ENCODE measurements at regions of chr4 and their contacts with region 1.

Region 1: DNA sequence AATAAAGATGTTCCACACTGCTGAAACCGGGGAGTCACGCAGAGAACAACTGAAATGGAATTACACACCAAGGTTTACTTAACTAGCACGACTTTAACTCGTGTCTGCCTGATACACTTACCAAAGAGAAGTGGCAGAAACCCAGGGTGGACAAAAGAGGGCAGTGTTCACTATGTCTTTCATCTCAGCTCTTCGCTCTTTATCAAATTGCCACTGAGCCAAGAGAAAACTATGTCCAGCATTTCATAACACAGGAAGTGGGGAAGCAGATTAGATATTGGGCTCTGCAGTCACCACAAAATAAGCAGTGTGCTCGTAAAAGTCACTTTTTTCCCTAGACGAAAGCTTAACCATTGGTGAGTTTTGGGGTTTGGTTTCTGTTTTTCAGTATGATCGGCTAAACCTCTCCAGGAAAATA is 155.7 kb downstream of the CHIC2 start:
- DNase-seq: peak; percentile 58
- H3K4me3 ChIP-seq: peak overlapping the region; percentile 14 to 21; a peak in 3 of 4 replicates
- H3K27ac ChIP-seq: peak overlapping the region; percentile 59 to 86
- H3K4me1 ChIP-seq: peaks cover 7 to 22% of the 10 kb centered on the region in 2 experiments; a peak in 3 of 4 replicates
- H3K27me3 ChIP-seq: no peaks in the 10 kb centered on the region
- CTCF ChIP-seq: peak; percentile 85
- EP300 ChIP-seq: peak; percentile 19 to 61; a peak in 3 of 4 replicates
- RAD21 ChIP-seq: peak; percentile 97

Region 2: DNA sequence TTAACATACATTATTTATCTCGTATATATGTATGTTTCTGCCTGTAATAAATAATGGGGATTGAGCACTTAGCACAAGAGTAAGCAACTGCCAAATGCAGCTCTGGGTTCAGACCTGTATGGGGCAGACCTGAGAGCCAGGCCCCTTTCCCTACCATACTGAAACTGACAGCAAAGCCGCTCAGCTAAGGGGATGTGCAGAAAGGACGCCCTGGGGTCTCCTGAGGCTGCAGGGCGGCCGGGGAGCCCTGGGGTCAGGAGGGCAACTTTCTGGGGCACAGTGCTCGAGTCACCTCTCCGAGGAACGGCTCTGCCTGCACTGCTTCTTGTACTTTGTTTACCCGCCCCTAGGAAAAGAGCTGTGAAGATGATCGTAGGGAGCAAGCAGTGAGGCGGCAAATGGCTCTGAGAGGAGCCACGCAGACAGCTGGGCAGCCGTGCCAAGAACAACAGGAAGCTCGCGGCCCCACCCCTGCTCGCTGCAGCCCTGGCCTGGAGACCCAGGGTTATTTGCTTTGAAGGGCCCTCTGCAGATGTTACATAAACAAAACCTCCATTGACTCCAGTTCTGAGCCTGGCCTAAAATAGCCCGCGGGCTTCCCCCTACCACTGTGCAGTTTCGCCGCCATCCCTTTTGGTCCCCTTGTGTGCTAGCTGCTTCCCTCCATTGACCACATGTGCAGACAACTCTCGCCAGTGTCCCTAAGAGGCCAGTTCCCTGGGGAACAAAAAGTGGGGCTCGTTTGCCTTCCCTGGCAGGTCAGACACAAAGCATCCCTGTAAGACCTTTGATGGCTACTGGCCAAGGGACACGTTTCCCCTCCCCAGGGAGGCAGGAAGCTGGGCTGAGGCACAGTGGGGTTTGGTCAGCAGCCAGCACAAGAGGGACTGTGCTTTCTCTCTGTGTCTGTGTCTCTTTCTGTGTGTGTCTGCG is 206.1 kb before region 1 on chr4:
- CTCF ChIA-PET with region 1: interaction called, 12 read pairs
- POLR2A ChIA-PET with region 1: no interaction called
- DNase-seq: peak; percentile 84
- H3K4me3 ChIP-seq: peak overlapping the region; percentile 4 to 22; a peak in 2 of 4 replicates
- H3K27ac ChIP-seq: peak overlapping the region; percentile 81 to 99
- H3K4me1 ChIP-seq: peaks cover 24 to 40% of the 10 kb centered on the region in 2 experiments
- H3K27me3 ChIP-seq: no peaks in the 10 kb centered on the region
- CTCF ChIP-seq: peak; percentile 20; the same call in 1 of the 2 replicates
- EP300 ChIP-seq: peak; percentile 22 to 38; a peak in 2 of 4 replicates
- RAD21 ChIP-seq: peak; percentile 20

Region 3: DNA sequence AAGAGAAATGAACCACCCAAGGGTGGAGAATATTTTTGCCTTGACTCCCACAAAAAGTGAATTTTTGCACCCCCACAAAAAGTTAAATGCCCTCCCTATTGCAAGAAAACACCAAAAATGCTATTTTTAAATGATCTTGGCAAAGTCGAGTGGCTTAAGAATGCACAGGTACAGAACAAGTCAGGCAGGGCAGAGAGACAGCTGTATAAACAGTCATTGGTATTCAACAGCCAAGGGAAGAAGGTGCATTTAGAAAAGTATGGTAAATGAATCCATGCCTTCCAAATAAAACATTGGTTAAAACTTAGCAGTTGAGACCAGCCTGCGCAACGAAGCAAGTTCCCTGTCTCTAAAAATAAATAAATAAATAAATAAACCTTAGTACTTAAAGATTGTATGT is 13.5 kb before region 1 on chr4:
- CTCF ChIA-PET with region 1: interaction called, 10 read pairs
- POLR2A ChIA-PET with region 1: no interaction called
- DNase-seq: no peak
- H3K4me3 ChIP-seq: no peak overlapping the region
- H3K27ac ChIP-seq: no peak overlapping the region
- H3K4me1 ChIP-seq: peaks cover 0 to 10% of the 10 kb centered on the region in 2 experiments; a peak in 2 of 4 replicates
- H3K27me3 ChIP-seq: no peaks in the 10 kb centered on the region
- CTCF ChIP-seq: no peak
- EP300 ChIP-seq: no peak
- RAD21 ChIP-seq: no peak

Region 4: DNA sequence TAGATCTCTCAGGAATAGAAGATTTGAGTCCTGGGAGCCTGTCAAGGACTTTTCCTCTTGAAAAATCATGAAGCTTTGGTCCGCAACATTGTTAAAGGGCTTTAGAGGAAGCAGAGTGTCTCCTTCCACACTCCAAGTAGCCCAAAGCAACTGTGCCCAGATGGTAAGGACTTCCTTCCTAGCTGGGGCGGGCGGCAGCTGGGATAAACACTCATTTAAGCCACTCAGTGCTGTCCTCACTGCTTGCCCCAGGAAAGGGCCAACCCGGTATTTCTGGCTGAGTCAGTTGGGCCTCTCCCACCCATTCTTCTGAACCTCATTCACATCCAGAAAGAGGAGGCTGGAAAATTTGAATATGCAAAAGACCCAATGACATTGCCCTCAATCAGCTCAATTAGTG is 11.4 kb after region 1 on chr4:
- CTCF ChIA-PET with region 1: interaction called, 37 read pairs
- POLR2A ChIA-PET with region 1: no interaction called
- DNase-seq: no peak
- H3K4me3 ChIP-seq: no peak overlapping the region
- H3K27ac ChIP-seq: no peak overlapping the region
- H3K4me1 ChIP-seq: peaks cover 1 to 11% of the 10 kb centered on the region in 2 experiments; a peak in 3 of 4 replicates
- H3K27me3 ChIP-seq: no peaks in the 10 kb centered on the region
- CTCF ChIP-seq: no peak
- EP300 ChIP-seq: no peak
- RAD21 ChIP-seq: no peak

Region 5: GRCh38 chr4:54217642-54218495 is 309.2 kb after region 1 on chr4:
- CTCF ChIA-PET with region 1: interaction called, 76 read pairs
- POLR2A ChIA-PET with region 1: no interaction called
- DNase-seq: peak; percentile 81
- H3K4me3 ChIP-seq: peak overlapping the region; percentile 45 to 54
- H3K27ac ChIP-seq: peak overlapping the region in 1 of 2 experiments; percentile 71; a peak in 1 of 4 replicates
- H3K4me1 ChIP-seq: peaks cover 0 to 7% of the 10 kb centered on the region in 2 experiments; a peak in 3 of 4 replicates
- H3K27me3 ChIP-seq: no peaks in the 10 kb centered on the region
- CTCF ChIP-seq: peak; percentile 96
- EP300 ChIP-seq: peak; percentile 24 to 56; a peak in 2 of 4 replicates
- RAD21 ChIP-seq: peak; percentile 94

Region 6: GRCh38 chr4:54228056-54228527 is 319.4 kb after region 1 on chr4:
- CTCF ChIA-PET with region 1: interaction called, 152 read pairs
- POLR2A ChIA-PET with region 1: interaction called, 8 read pairs
- DNase-seq: peak; percentile 87
- H3K4me3 ChIP-seq: peak overlapping the region; percentile 64 to 85
- H3K27ac ChIP-seq: peak overlapping the region; percentile 79 to 90; a peak in 3 of 4 replicates
- H3K4me1 ChIP-seq: peaks cover 0 to 20% of the 10 kb centered on the region in 2 experiments; a peak in 2 of 4 replicates
- H3K27me3 ChIP-seq: no peaks in the 10 kb centered on the region
- CTCF ChIP-seq: peak; percentile 88
- EP300 ChIP-seq: no peak
- RAD21 ChIP-seq: peak; percentile 91

Measured in SK-N-SH (cell line).